ENCODE measurements at regions of chr4 and their contacts with region 1.

Region 1: DNA sequence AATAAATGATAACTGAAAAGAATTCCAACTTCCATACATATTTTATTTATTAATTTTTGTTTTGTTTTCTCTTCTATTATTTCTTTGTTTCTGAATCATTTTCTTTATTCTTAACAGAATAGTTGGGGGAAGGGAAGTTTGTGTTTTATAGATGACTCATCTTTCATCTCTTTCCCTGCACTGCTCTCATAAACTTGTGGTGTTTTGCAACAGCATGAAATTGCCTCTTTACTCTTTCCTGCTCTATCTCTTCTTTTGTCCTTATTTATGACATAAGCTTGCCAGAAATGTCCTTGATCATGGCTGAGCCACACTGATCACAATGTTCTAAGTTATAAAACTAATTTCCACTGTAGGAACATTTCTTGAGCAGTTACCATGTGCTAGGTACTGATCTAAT is 22.3 kb downstream of the QRFPR start:
- DNase-seq: no peak
- ATAC-seq: no peak
- H3K4me3 Mint-ChIP-seq: no peak overlapping the region
- H3K27ac Mint-ChIP-seq: no peak overlapping the region
- H3K4me1 Mint-ChIP-seq: no peaks in the 10 kb centered on the region
- H3K27me3 Mint-ChIP-seq: peaks cover 8% of the 10 kb centered on the region

Region 2: GRCh38 chr4:121255986-121256750 is 102.3 kb before region 1 on chr4:
- CTCF ChIA-PET with region 1: no interaction called
- POLR2A ChIA-PET with region 1: no interaction called
- DNase-seq: peak; percentile 71
- ATAC-seq: peak; percentile 96
- H3K4me3 Mint-ChIP-seq: peak overlapping the region; percentile 38
- H3K27ac Mint-ChIP-seq: peak overlapping the region; percentile 90
- H3K4me1 Mint-ChIP-seq: peaks cover 58% of the 10 kb centered on the region
- H3K27me3 Mint-ChIP-seq: no peaks in the 10 kb centered on the region

Region 3: GRCh38 chr4:121370729-121371325 is 12.4 kb after region 1 on chr4:
- CTCF ChIA-PET with region 1: interaction called, 34 read pairs
- POLR2A ChIA-PET with region 1: no interaction called
- DNase-seq: peak; percentile 51
- ATAC-seq: no peak
- H3K4me3 Mint-ChIP-seq: no peak overlapping the region
- H3K27ac Mint-ChIP-seq: no peak overlapping the region
- H3K4me1 Mint-ChIP-seq: no peaks in the 10 kb centered on the region
- H3K27me3 Mint-ChIP-seq: peaks cover 19% of the 10 kb centered on the region

Region 4: GRCh38 chr4:121551881-121552280 is 193.4 kb after region 1 on chr4:
- CTCF ChIA-PET with region 1: no interaction called
- POLR2A ChIA-PET with region 1: no interaction called
- DNase-seq: no peak
- ATAC-seq: no peak
- H3K4me3 Mint-ChIP-seq: no peak overlapping the region
- H3K27ac Mint-ChIP-seq: no peak overlapping the region
- H3K4me1 Mint-ChIP-seq: no peaks in the 10 kb centered on the region
- H3K27me3 Mint-ChIP-seq: peaks cover 2% of the 10 kb centered on the region